Dorsolateral prefrontal cortex (tissue), 120 donors: ENCODE measurements at regions of chr6 and their contacts with region 1.

Region 1: DNA sequence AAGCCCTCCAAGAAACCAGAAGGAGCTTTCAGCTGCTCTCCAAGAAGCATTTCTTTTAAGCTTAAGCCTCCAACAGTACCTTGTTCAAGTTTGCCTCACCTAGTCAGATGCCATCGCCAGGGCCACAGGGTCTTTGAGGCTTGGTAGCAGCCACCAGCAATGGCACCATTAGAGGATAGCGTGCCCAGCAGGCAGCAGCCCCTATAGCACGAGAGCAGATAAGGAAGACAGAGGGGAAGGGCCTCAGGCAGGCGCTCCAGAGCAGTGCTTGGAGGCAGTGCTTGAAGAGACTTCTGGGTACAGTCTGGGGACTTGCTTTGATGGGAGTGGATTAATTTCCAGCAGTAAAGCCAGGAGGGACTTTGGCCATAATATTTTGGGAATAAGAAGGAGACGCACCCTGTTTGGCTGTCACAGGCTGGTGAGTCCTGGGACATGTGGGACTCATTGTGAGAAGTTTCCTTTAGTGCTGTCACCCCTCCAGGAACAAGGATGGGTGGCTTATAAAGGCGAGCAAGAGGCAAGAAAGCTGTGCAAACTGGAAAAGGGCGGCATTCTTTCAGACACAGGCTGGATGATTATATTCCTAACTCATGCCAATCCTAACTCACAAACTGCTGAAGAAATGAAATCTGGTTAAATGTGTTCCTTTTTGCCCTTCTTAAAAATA is 77.4 kb upstream of the KCNK16 start:
- DNase-seq: no peak
- H3K4me3 ChIP-seq: no peak overlapping the region
- H3K27ac ChIP-seq: peak overlapping the region in 2 of 59 donors; percentile 7 to 37
- H3K27me3 ChIP-seq: no peaks in the 10 kb centered on the region
- CTCF ChIP-seq: no peak

Region 2: DNA sequence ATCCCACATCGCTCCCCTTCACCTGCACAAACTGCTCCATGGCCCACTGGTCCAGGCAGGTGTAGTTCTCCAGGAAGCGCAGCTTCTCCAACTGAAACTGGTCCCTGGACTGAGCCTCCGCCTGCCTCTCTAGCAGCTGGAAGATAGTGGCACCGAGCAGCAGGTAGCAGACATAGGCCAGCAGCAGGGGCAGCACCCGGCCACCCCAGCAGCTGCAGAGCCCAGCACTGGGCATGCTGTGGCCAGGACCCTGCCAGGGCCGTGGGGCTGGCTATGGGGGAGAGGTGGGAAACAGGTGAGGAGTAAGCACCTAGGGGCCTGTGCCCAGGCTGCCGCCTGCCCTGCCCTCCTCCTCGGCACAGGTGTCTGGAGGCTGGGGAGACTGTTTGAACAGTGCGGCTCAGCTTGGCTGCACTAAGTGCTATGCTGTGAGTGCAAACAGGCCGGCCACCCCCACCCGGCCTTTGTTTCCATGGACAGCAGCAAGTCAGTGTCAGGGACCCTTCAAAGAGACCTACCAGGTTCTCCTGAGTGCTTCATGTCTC is 77.5 kb before region 1 on chr6 and contains the start of gene KCNK16:
- intact Hi-C with region 1: no loop called
- DNase-seq: no peak
- H3K4me3 ChIP-seq: no peak within 1 kb of the TSS
- H3K27ac ChIP-seq: no peak within 1 kb of the TSS
- H3K27me3 ChIP-seq: no peaks in the 10 kb centered on the region
- CTCF ChIP-seq: no peak
- total RNA-seq, gene KCNK16: 0.42 to 0.76 (median 0.50) TPM in 7 of 120 experiments, not detected in the others

Region 3: GRCh38 chr6:39430871-39431523 is 31.1 kb after region 1 on chr6:
- intact Hi-C with region 1: loop called in 1 of 2 experiments (anchors 5 kb)
- DNase-seq: peak; percentile 71 to 84 (median 82)
- H3K4me3 ChIP-seq: peak overlapping the region in 31 of 59 donors; percentile 0 to 54 (median 17)
- H3K27ac ChIP-seq: peak overlapping the region in 57 of 59 donors; percentile 15 to 92 (median 72)
- H3K27me3 ChIP-seq: no peaks in the 10 kb centered on the region
- CTCF ChIP-seq: peak in 36 of 56 donors; percentile 10 to 59 (median 31)